GM10248 (cell line): ENCODE measurements at regions of chr15 and their contacts with region 1.

Region 1: DNA sequence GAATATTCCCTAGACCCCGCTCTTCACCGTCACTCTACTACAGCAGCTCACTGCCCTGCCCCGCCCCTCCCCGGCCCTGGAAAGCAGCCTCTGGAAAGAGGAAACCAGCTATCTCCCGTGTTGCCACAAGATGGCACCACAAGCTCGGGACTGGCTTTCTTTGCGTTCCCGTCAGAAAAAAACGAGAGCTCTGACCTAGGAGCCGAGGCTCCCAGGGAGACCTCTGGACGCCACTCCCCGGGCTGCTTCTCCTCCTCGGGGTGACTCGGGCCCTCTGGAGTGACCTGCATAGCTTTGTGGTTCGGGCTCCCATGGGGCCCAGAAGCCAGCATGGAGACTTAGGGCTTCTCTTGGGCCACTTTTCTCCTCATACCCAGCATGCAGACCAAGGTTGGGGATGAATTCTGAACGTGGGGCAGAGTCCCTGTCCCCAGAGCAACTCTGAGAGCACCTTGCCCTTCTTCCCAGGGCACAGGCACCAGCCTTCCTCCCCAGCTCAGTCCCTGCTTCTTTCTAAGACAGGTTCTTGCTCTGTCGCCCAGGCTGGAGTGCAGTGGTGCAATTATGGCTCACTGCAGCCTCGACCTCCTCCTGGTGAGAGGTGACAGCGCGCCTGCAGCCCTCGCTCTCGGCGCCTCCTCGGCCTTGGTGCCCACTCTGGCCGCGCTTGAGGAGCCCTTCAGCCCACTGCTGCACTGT is 19.0 kb downstream of the STOML1 start:
- DNase-seq: peak; percentile 86
- CTCF ChIP-seq: peak; percentile 90

Region 2: GRCh38 chr15:73897441-73898261 is 75.5 kb before region 1 on chr15:
- CTCF ChIA-PET with region 1: no interaction called
- POLR2A ChIA-PET with region 1: no interaction called
- DNase-seq: peak; percentile 82
- CTCF ChIP-seq: peak; percentile 76

Region 3: GRCh38 chr15:73991726-73992593 is 18.8 kb after region 1 on chr15 and contains the start of gene STOML1:
- CTCF ChIA-PET with region 1: interaction called, 162 read pairs
- POLR2A ChIA-PET with region 1: interaction called, 4 read pairs
- DNase-seq: peak; percentile 95
- CTCF ChIP-seq: peak; percentile 91

Region 4: GRCh38 chr15:74036271-74037170 is 63.4 kb after region 1 on chr15:
- CTCF ChIA-PET with region 1: interaction called, 28 read pairs
- POLR2A ChIA-PET with region 1: no interaction called
- DNase-seq: no peak
- CTCF ChIP-seq: peak; percentile 6

Region 5: GRCh38 chr15:74307827-74308644 is 334.9 kb after region 1 on chr15:
- CTCF ChIA-PET with region 1: interaction called, 10 read pairs
- POLR2A ChIA-PET with region 1: no interaction called
- DNase-seq: peak; percentile 70
- CTCF ChIP-seq: peak; percentile 82